ENCODE measurements at regions of chr15 and their contacts with region 1.

Region 1: GRCh38 chr15:38271895-38272294 is 19.3 kb downstream of the SPRED1 start:
- DNase-seq: no peak
- ATAC-seq: no peak
- H3K4me3 ChIP-seq: no peak overlapping the region
- H3K27ac ChIP-seq: no peak overlapping the region
- H3K4me1 ChIP-seq: peaks cover 9% of the 10 kb centered on the region
- H3K27me3 ChIP-seq: no peaks in the 10 kb centered on the region
- CTCF ChIP-seq: no peak

Region 2: DNA sequence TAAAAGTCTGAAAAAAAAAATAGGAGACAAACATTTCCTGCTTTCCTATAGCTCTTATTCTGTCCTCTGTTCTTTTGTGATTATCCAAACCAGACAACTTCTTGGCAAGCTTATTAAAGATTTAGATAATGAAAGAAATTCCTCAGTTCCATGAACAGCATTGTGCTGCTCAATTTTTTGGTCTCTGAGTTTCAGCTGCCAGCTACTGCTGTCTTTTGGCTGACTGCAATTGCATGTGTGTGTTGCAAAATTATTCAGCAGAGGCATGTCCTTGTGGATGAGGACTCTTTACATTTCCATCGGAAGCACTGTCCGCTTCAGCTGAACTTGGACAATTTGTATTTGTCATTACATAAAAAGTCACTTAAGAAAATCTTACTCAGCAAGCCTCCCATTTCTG is 690.0 kb after region 1 on chr15:
- CTCF ChIA-PET with region 1: no interaction called
- POLR2A ChIA-PET with region 1: interaction called, 11 read pairs
- intact Hi-C with region 1: no loop called
- DNase-seq: no peak
- ATAC-seq: no peak
- H3K4me3 ChIP-seq: no peak overlapping the region
- H3K27ac ChIP-seq: no peak overlapping the region
- H3K4me1 ChIP-seq: no peaks in the 10 kb centered on the region
- H3K27me3 ChIP-seq: no peaks in the 10 kb centered on the region
- CTCF ChIP-seq: no peak

Measured in PC-3 (cell line).